ENCODE measurements at regions of chr6 and their contacts with region 1.

Region 1: GRCh38 chr6:129264480-129265045 is 381.6 kb downstream of the LAMA2 start:
- DNase-seq: no peak
- H3K4me3 ChIP-seq: no peak overlapping the region
- H3K4me3 Mint-ChIP-seq: no peak overlapping the region
- H3K27ac ChIP-seq: no peak overlapping the region
- H3K27ac Mint-ChIP-seq: no peak overlapping the region
- H3K4me1 ChIP-seq: no peaks in the 10 kb centered on the region
- H3K4me1 Mint-ChIP-seq: peaks cover 0 to 1% (median 0%) of the 10 kb centered on the region in 4 donors
- H3K27me3 ChIP-seq: no peaks in the 10 kb centered on the region
- H3K27me3 Mint-ChIP-seq: no peaks in the 10 kb centered on the region

Region 2: GRCh38 chr6:128532827-128533226 is 731.7 kb before region 1 on chr6:
- CTCF ChIA-PET with region 1: no interaction called
- POLR2A ChIA-PET with region 1: no interaction called
- intact Hi-C with region 1: no loop called
- DNase-seq: no peak
- H3K4me3 ChIP-seq: no peak overlapping the region
- H3K4me3 Mint-ChIP-seq: no peak overlapping the region
- H3K27ac ChIP-seq: no peak overlapping the region
- H3K27ac Mint-ChIP-seq: no peak overlapping the region
- H3K4me1 ChIP-seq: no peaks in the 10 kb centered on the region
- H3K4me1 Mint-ChIP-seq: no peaks in the 10 kb centered on the region
- H3K27me3 ChIP-seq: no peaks in the 10 kb centered on the region
- H3K27me3 Mint-ChIP-seq: peaks cover 13 to 16% of the 10 kb centered on the region in 2 donors

Region 3: DNA sequence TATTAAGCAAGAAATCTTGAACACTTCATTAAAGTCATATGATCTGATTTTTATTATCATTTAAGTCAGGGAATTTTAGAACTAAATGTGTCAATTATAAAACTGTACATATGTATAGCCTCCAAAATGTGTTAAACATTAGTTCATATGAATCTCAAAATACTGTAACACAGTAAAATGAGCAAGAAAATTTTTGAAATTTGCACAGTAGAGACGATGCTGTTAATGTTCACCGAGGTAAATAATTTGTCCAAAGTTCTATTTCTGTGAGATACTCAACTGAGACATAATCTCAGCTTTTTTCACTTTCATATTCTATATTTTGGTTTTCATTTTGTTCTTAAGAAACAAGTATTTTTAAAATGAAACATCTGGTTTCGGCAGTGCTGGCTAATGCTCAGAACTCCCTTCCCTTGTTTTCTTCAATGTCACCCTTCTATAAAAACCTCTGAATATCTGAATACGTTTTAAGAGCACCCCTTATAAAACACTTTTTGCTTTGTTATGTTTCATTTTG is 28.5 kb before region 1 on chr6:
- CTCF ChIA-PET with region 1: no interaction called
- POLR2A ChIA-PET with region 1: no interaction called
- intact Hi-C with region 1: no loop called
- DNase-seq: no peak
- H3K4me3 ChIP-seq: no peak overlapping the region
- H3K4me3 Mint-ChIP-seq: no peak overlapping the region
- H3K27ac ChIP-seq: no peak overlapping the region
- H3K27ac Mint-ChIP-seq: no peak overlapping the region
- H3K4me1 ChIP-seq: no peaks in the 10 kb centered on the region
- H3K4me1 Mint-ChIP-seq: no peaks in the 10 kb centered on the region
- H3K27me3 ChIP-seq: no peaks in the 10 kb centered on the region
- H3K27me3 Mint-ChIP-seq: peaks cover 0 to 1% of the 10 kb centered on the region in 2 donors

Region 4: GRCh38 chr6:129251669-129252376 is 12.7 kb before region 1 on chr6:
- CTCF ChIA-PET with region 1: interaction called, 11 read pairs
- POLR2A ChIA-PET with region 1: no interaction called
- intact Hi-C with region 1: no loop called
- DNase-seq: peak; percentile 41 to 57 (median 46)
- H3K4me3 ChIP-seq: no peak overlapping the region
- H3K4me3 Mint-ChIP-seq: peak overlapping the region in 2 of 8 donors; percentile 10 to 25
- H3K27ac ChIP-seq: no peak overlapping the region
- H3K27ac Mint-ChIP-seq: no peak overlapping the region
- H3K4me1 ChIP-seq: peaks cover 5% of the 10 kb centered on the region
- H3K4me1 Mint-ChIP-seq: peaks cover 0 to 15% (median 9%) of the 10 kb centered on the region in 4 donors
- H3K27me3 ChIP-seq: no peaks in the 10 kb centered on the region
- H3K27me3 Mint-ChIP-seq: peaks cover 16 to 22% of the 10 kb centered on the region in 2 donors

Region 5: DNA sequence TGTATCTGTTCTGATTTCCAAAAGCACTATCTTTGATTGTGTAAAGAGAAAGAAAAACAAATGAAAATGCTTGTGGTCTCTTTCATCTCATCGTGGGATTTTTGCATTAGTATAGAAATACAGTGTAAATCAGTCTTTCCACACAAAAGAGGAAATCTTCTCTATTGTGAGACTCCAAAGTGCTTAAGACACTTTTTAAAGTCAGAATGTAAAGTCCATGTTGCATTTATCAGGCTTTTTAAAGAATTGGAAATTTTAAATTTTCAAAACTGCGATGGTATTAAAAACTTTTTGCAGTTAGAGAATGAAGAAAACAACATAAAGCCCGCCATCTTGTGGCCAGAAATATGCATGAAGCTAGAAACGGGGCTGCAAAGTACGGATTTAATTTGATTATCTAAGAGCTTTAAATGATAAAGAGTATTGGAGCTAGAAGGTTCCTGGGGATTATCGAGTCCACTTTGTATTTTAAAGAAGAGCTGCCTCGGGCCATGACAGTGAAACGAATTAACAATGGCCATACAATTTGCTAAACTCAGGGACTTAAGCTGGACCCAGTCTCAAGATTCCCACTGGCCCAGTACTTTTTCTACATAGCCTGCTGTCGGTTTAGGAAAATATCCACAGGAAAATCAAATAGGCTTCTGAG is 105.8 kb after region 1 on chr6:
- CTCF ChIA-PET with region 1: no interaction called
- POLR2A ChIA-PET with region 1: no interaction called
- intact Hi-C with region 1: no loop called
- DNase-seq: peak; percentile 39 to 51 (median 44)
- H3K4me3 ChIP-seq: no peak overlapping the region
- H3K4me3 Mint-ChIP-seq: peak overlapping the region in 6 of 8 donors; percentile 40 to 66 (median 48)
- H3K27ac ChIP-seq: no peak overlapping the region
- H3K27ac Mint-ChIP-seq: no peak overlapping the region
- H3K4me1 ChIP-seq: peaks cover 9% of the 10 kb centered on the region
- H3K4me1 Mint-ChIP-seq: peaks cover 5 to 17% (median 11%) of the 10 kb centered on the region in 4 donors
- H3K27me3 ChIP-seq: no peaks in the 10 kb centered on the region
- H3K27me3 Mint-ChIP-seq: no peaks in the 10 kb centered on the region

Region 6: DNA sequence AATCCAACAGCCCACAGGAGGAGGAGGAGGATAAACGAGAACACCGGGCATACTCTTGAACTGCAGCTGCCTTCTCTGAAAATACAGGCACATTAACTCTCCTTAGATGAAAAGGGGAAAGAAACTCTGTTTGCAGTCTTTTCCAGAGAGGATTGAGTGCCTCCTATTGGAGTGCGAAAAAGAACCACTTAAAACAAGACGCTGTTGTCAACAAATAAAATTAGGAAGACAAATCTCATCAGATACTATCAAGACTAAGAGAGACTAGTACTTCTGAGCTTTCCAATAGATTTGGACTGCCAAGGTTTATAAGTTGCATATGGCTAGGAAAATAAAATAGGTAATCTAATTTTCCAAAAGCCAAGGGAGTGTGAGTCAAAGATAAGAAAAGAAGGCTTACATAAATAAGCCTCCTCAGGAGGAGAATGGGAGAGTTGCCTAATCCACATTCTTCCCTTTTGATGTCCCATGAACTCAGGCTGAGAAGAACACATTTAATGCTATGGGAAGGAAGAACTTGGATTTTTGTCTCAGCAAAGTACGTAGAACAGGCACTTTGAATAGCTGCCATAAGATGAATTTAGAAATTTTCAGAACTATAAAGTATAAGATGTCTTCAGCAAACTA is 290.8 kb after region 1 on chr6:
- CTCF ChIA-PET with region 1: no interaction called
- POLR2A ChIA-PET with region 1: no interaction called
- intact Hi-C with region 1: no loop called
- DNase-seq: no peak
- H3K4me3 ChIP-seq: no peak overlapping the region
- H3K4me3 Mint-ChIP-seq: no peak overlapping the region
- H3K27ac ChIP-seq: no peak overlapping the region
- H3K27ac Mint-ChIP-seq: no peak overlapping the region
- H3K4me1 ChIP-seq: no peaks in the 10 kb centered on the region
- H3K4me1 Mint-ChIP-seq: no peaks in the 10 kb centered on the region
- H3K27me3 ChIP-seq: no peaks in the 10 kb centered on the region
- H3K27me3 Mint-ChIP-seq: peaks cover 0 to 5% of the 10 kb centered on the region in 2 donors